Activated CD4-positive, alpha-beta memory T cell treated with anti-CD3 and anti-CD28 coated beads, Interleukin-2, amount 10 ng/mL, durations not matched to agents 7 days and 5 days (primary cell): ENCODE measurements at regions of chr1 and their contacts with region 1.

Region 1: DNA sequence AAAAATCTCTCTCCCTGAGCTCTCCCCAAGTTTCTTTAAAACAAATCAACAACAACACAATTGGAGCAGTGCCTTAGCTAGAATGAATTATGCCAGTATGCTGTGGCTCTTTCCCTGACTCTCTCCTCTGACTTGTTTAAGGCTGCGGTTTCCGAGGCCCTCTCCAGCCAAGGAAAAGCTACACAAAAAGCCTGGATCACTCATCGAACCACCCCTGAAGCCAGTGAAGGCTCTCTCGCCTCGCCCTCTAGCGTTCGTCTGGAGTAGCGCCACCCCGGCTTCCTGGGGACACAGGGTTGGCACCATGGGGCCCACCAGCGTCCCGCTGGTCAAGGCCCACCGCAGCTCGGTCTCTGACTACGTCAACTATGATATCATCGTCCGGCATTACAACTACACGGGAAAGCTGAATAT is 1.9 kb downstream of the S1PR1 start:
- DNase-seq: peak; percentile 90
- H3K4me3 Mint-ChIP-seq: peak overlapping the region; percentile 95
- H3K27ac Mint-ChIP-seq: peak overlapping the region; percentile 98
- H3K4me1 Mint-ChIP-seq: peaks cover 51% of the 10 kb centered on the region
- H3K27me3 Mint-ChIP-seq: no peaks in the 10 kb centered on the region

Region 2: DNA sequence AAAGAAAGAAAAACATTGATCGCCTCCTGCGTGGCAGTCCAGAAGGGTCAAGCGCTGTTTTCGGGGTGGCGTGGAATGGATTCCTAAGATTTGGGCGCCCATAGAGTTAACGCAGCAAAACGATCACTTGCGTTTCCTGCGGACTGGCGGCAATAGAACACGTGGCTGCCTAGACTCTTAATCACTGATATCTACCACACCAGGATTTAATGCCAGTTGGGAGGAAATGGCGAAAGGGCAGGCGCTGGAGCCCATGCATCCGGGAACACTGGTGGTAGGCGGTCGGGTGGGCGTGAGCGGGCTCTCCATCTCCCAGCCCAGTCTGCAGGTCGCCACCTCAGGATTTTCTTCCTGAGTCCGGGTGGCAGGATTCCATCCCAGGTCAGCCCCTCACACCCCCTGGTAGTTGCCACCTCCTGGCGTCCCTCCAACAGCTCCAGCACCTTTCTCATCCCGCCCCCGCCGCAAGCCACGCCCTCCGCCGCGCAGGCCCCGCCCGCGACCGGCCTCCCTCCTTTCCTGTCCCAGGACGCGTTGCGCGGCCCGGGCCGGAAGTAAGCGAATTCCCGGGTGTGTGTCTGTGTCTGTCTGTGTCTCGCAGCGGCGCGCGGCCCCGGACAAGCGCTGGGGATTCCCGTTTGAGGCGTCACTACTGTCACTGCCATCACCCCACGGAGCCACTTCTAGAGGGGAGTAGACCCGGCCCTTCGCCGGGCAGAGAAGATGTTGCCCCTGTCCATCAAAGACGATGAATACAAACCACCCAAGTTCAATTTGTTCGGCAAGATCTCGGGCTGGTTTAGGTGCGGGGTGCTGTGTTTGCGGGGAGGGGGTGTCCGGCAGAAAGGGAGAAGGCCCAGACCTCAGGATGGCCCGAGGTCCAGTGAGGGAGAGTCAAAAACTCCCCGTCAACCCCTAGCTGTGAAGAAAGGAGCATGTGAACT is 342.9 kb before region 1 on chr1 and contains the start of gene SLC30A7:
- CTCF ChIA-PET with region 1: interaction called, 5 read pairs
- POLR2A ChIA-PET with region 1: interaction called, 57 read pairs
- DNase-seq: peak; percentile 94
- H3K4me3 Mint-ChIP-seq: peak within 1 kb of the TSS; percentile 89
- H3K27ac Mint-ChIP-seq: peak within 1 kb of the TSS; percentile 94
- H3K4me1 Mint-ChIP-seq: peaks cover 48% of the 10 kb centered on the region
- H3K27me3 Mint-ChIP-seq: no peaks in the 10 kb centered on the region
- total RNA-seq, gene SLC30A7: 38.9 to 42.7 TPM

Region 3: DNA sequence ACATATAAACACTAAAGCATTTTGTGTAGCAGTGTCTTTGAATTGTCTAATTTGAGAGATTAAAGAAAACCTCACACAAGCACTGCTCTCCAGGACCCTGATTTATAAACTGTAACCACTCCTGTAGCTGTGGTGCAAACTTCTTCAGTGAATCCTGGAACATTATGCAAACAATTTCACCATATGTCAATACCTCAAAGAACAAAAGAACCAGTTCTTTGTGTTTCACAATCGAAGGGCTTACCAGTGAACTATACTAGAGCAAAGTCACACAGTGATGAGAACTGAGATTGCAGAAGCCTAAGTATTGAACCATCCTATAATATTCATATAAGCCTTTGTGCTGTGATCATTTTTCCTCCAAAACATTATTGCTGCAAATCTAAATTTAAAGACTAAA is 234.6 kb before region 1 on chr1:
- CTCF ChIA-PET with region 1: interaction called, 4 read pairs
- POLR2A ChIA-PET with region 1: interaction called, 10 read pairs
- DNase-seq: no peak
- H3K4me3 Mint-ChIP-seq: no peak overlapping the region
- H3K27ac Mint-ChIP-seq: no peak overlapping the region
- H3K4me1 Mint-ChIP-seq: peaks cover 41% of the 10 kb centered on the region
- H3K27me3 Mint-ChIP-seq: no peaks in the 10 kb centered on the region

Region 4: GRCh38 chr1:101112051-101112780 is 126.5 kb before region 1 on chr1:
- CTCF ChIA-PET with region 1: interaction called, 14 read pairs
- POLR2A ChIA-PET with region 1: interaction called, 50 read pairs
- DNase-seq: peak; percentile 78
- H3K4me3 Mint-ChIP-seq: no peak overlapping the region
- H3K27ac Mint-ChIP-seq: peak overlapping the region; percentile 94
- H3K4me1 Mint-ChIP-seq: peaks cover 52% of the 10 kb centered on the region
- H3K27me3 Mint-ChIP-seq: no peaks in the 10 kb centered on the region

Region 5: GRCh38 chr1:101178688-101179491 is 59.8 kb before region 1 on chr1:
- CTCF ChIA-PET with region 1: interaction called, 12 read pairs
- POLR2A ChIA-PET with region 1: interaction called, 133 read pairs
- DNase-seq: no peak
- H3K4me3 Mint-ChIP-seq: peak overlapping the region; percentile 69
- H3K27ac Mint-ChIP-seq: peak overlapping the region; percentile 97
- H3K4me1 Mint-ChIP-seq: peaks cover 69% of the 10 kb centered on the region
- H3K27me3 Mint-ChIP-seq: no peaks in the 10 kb centered on the region

Region 6: GRCh38 chr1:101228424-101229134 is 10.1 kb before region 1 on chr1:
- CTCF ChIA-PET with region 1: no interaction called
- POLR2A ChIA-PET with region 1: interaction called, 38 read pairs
- DNase-seq: no peak
- H3K4me3 Mint-ChIP-seq: no peak overlapping the region
- H3K27ac Mint-ChIP-seq: no peak overlapping the region
- H3K4me1 Mint-ChIP-seq: peaks cover 33% of the 10 kb centered on the region
- H3K27me3 Mint-ChIP-seq: no peaks in the 10 kb centered on the region

Region 7: GRCh38 chr1:101309334-101310311 is 70.9 kb after region 1 on chr1:
- CTCF ChIA-PET with region 1: interaction called, 7 read pairs
- POLR2A ChIA-PET with region 1: interaction called, 47 read pairs
- DNase-seq: peak; percentile 72
- H3K4me3 Mint-ChIP-seq: peak overlapping the region; percentile 74
- H3K27ac Mint-ChIP-seq: peak overlapping the region; percentile 92
- H3K4me1 Mint-ChIP-seq: peaks cover 62% of the 10 kb centered on the region
- H3K27me3 Mint-ChIP-seq: peaks cover 15% of the 10 kb centered on the region